HEK293T (cell line): ENCODE measurements at regions of chr13 and their contacts with region 1.

Region 1: GRCh38 chr13:94595950-94596574 is at the start of gene TGDS:
- DNase-seq: peak; percentile 100

Region 2: DNA sequence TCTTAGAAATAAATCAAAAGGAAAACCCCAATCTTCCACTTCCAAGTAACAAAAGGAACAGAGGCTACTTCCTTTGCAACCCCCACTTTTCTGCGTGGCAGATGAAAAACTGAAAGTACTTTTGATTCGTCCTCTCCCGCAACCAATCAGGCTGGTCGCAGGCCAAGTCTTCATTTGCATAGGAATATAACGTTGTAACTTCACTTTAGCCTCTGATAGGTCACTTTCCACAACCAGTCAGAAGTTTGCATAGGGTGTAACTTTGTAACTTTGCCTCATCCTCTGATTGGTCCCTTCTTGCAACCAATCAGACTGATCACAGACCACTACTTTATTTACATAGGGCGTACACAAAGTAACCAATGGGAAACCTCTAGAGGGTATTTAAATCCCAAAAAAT is 37.3 kb before region 1 on chr13:
- CTCF ChIA-PET with region 1: no interaction called
- POLR2A ChIA-PET with region 1: interaction called, 13 read pairs
- DNase-seq: no peak

Region 3: DNA sequence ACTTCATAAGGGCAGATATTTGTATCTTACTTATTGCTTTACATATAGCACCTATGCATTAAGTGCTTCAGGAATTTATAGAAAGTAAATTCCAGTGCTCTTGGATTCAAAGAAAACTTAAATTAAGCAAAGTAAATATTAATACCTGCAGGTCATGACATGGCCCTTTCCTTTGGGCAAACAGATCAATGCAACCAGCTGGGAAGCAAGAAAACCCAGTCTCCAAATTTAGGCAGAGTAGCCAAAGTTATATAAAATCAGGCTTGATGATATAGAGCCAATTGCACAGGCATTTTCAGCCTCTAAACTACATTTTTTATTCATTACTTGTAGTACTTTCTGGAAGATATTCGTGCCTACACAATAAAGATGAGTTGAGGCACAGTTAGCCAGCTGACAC is 17.0 kb before region 1 on chr13:
- CTCF ChIA-PET with region 1: no interaction called
- POLR2A ChIA-PET with region 1: interaction called, 18 read pairs
- DNase-seq: no peak

Region 4: DNA sequence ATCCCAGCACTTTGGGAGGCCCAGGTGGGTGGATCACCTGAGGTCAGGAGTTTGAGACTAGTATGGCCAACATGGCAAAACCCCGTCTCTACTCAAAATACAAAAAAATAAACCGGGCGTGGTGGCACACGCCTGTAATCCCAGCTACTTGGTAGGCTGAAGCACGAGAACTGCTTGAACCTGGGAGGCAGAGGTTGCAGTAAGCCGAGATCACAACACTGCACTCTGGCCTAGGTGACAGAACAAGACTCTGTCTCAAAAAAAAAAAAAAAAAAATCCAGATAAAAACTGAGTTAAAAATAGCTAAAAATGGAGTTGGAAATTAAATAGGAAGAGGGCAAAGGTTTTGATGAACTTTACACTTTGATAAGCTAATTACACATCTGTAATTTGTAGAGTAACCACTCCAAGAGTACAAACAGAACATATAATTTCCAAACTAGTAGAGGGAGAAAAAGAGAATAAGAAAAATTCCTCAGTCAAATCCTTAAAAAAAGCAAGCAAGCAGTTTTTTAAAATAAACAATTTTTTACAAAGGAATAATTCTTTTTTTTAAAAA is 10.4 kb before region 1 on chr13:
- CTCF ChIA-PET with region 1: interaction called, 6 read pairs
- POLR2A ChIA-PET with region 1: interaction called, 18 read pairs
- DNase-seq: no peak

Region 5: GRCh38 chr13:94607056-94607455 is 11.0 kb after region 1 on chr13:
- CTCF ChIA-PET with region 1: no interaction called
- POLR2A ChIA-PET with region 1: interaction called, 14 read pairs
- DNase-seq: no peak